ENCODE measurements at regions of chr5 and their contacts with region 1.

Region 1: GRCh38 chr5:112921833-112922817 is at the start of gene REEP5:
- DNase-seq: peak; percentile 88
- ATAC-seq: peak; percentile 80
- H3K4me3 Mint-ChIP-seq: peak within 1 kb of the TSS; percentile 95
- H3K27ac Mint-ChIP-seq: peak within 1 kb of the TSS; percentile 88
- H3K4me1 Mint-ChIP-seq: peaks cover 57% of the 10 kb centered on the region
- H3K27me3 Mint-ChIP-seq: no peaks in the 10 kb centered on the region
- CTCF ChIP-seq: peak; percentile 80
- total RNA-seq, gene REEP5: 38.0 to 40.6 TPM

Region 2: GRCh38 chr5:112059579-112060135 is 862.5 kb before region 1 on chr5:
- CTCF ChIA-PET with region 1: no interaction called
- POLR2A ChIA-PET with region 1: no interaction called
- intact Hi-C with region 1: no loop called
- DNase-seq: no peak
- ATAC-seq: no peak
- H3K4me3 Mint-ChIP-seq: no peak overlapping the region
- H3K27ac Mint-ChIP-seq: no peak overlapping the region
- H3K4me1 Mint-ChIP-seq: no peaks in the 10 kb centered on the region
- H3K27me3 Mint-ChIP-seq: peaks cover 2% of the 10 kb centered on the region
- CTCF ChIP-seq: no peak

Region 3: GRCh38 chr5:112860929-112861637 is 61.0 kb before region 1 on chr5 and contains the start of gene SRP19:
- CTCF ChIA-PET with region 1: interaction called, 4 read pairs
- POLR2A ChIA-PET with region 1: interaction called, 10 read pairs
- intact Hi-C with region 1: loop called (anchors 5 kb)
- DNase-seq: peak; percentile 94
- ATAC-seq: peak; percentile 94
- H3K4me3 Mint-ChIP-seq: peak within 1 kb of the TSS; percentile 96
- H3K27ac Mint-ChIP-seq: peak within 1 kb of the TSS; percentile 98
- H3K4me1 Mint-ChIP-seq: peaks cover 25% of the 10 kb centered on the region
- H3K27me3 Mint-ChIP-seq: peaks cover 9% of the 10 kb centered on the region
- CTCF ChIP-seq: no peak
- total RNA-seq, gene SRP19: 45.6 to 47.0 TPM

Region 4: DNA sequence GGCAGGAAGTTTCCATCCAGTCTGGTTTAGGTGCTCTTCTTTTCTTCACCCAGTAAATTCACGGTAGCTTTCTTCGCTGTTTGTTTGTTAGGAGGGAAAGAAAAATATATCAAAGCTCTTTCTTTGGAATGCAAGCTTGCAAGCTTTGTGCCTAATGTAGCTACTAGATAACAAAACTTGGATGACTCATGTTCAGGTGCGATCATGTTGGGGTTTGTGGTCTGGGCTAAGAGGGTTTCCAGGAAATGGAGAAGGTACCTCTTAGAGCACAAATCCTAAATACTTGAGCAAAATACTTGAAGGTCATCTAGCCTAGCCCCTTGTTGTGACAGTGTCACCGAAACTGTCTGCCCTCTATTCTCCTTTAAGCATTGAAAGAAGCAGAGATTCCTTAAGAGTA is 43.4 kb before region 1 on chr5:
- CTCF ChIA-PET with region 1: interaction called, 5 read pairs
- POLR2A ChIA-PET with region 1: interaction called, 3 read pairs
- intact Hi-C with region 1: loop called (anchors 2 kb)
- DNase-seq: peak; percentile 84
- ATAC-seq: peak; percentile 94
- H3K4me3 Mint-ChIP-seq: peak overlapping the region; percentile 26
- H3K27ac Mint-ChIP-seq: peak overlapping the region; percentile 85
- H3K4me1 Mint-ChIP-seq: peaks cover 32% of the 10 kb centered on the region
- H3K27me3 Mint-ChIP-seq: no peaks in the 10 kb centered on the region
- CTCF ChIP-seq: no peak

Region 5: DNA sequence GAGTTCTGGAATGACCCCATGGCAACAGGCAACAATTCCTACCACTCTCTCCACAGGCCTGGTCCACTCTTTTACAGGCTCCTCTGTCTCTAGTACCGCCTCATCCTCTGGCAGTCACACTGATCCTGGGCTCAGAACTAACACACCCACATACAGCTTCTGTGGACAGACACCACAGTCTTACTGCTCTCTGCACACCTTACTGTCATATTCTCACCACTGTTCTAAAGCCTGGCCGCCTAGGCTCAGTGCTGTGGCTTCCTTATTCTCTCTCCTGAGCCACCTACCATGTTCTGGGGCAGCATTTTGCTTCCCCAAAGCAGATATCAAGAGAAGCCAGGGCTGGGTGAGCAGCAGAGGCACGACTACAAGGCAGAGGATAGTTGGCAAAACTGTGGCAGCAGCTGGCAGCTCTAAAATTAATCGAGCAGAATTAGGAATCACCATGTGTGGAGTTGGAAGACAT is 14.9 kb before region 1 on chr5:
- CTCF ChIA-PET with region 1: interaction called, 5 read pairs
- POLR2A ChIA-PET with region 1: interaction called, 15 read pairs
- intact Hi-C with region 1: no loop called
- DNase-seq: no peak
- ATAC-seq: no peak
- H3K4me3 Mint-ChIP-seq: no peak overlapping the region
- H3K27ac Mint-ChIP-seq: no peak overlapping the region
- H3K4me1 Mint-ChIP-seq: peaks cover 11% of the 10 kb centered on the region
- H3K27me3 Mint-ChIP-seq: no peaks in the 10 kb centered on the region
- CTCF ChIP-seq: no peak

Region 6: GRCh38 chr5:112960315-112960714 is 38.2 kb after region 1 on chr5:
- CTCF ChIA-PET with region 1: interaction called, 5 read pairs
- POLR2A ChIA-PET with region 1: interaction called, 3 read pairs
- intact Hi-C with region 1: loop called (anchors 5 kb)
- DNase-seq: no peak
- ATAC-seq: no peak
- H3K4me3 Mint-ChIP-seq: no peak overlapping the region
- H3K27ac Mint-ChIP-seq: no peak overlapping the region
- H3K4me1 Mint-ChIP-seq: peaks cover 30% of the 10 kb centered on the region
- H3K27me3 Mint-ChIP-seq: peaks cover 1% of the 10 kb centered on the region
- CTCF ChIP-seq: no peak

Region 7: GRCh38 chr5:112976432-112977309 is 54.5 kb after region 1 on chr5 and contains the start of gene DCP2:
- CTCF ChIA-PET with region 1: interaction called, 9 read pairs
- POLR2A ChIA-PET with region 1: interaction called, 13 read pairs
- intact Hi-C with region 1: loop called (anchors 5 kb)
- DNase-seq: peak; percentile 98
- ATAC-seq: peak; percentile 95
- H3K4me3 Mint-ChIP-seq: peak within 1 kb of the TSS; percentile 93
- H3K27ac Mint-ChIP-seq: peak within 1 kb of the TSS; percentile 98
- H3K4me1 Mint-ChIP-seq: peaks cover 36% of the 10 kb centered on the region
- H3K27me3 Mint-ChIP-seq: no peaks in the 10 kb centered on the region
- CTCF ChIP-seq: no peak
- total RNA-seq, gene DCP2: 88.9 to 91.0 TPM